SK-N-SH (cell line): ENCODE measurements at regions of chr2 and their contacts with region 1.

Region 1: DNA sequence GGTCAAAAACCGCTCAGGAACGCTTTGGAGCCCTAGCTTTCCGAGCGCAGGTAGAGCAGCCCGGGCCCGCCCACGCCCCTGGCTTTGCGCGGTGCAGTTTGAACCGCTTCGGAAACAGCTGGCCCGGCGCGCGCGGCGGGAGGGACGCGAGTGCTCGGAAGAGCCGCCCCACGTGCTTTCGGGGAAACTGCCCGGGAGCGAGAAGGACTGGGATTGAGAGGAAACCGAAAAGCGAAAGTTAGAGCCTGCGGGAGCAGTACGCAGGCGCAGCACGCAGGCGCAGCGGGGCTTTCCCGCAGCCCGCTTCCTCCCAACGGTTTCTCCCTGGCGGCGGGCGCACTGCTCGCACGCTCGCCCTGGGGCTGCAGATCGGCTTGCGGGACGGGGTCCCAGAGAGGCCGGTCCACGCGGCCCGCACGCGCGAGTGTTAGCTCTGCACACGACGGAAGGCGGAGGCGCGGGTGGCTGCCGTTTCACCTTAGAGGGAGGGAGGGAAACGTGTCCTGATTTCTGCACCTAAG is 6.3 kb upstream of the STAT1 start:
- DNase-seq: peak; percentile 98
- H3K4me3 ChIP-seq: peak overlapping the region; percentile 75 to 79
- H3K27ac ChIP-seq: peak overlapping the region; percentile 65 to 94
- H3K4me1 ChIP-seq: peaks cover 0 to 8% of the 10 kb centered on the region in 2 experiments; a peak in 3 of 4 replicates
- H3K27me3 ChIP-seq: no peaks in the 10 kb centered on the region
- CTCF ChIP-seq: peak; percentile 12; the same call in 1 of the 2 replicates
- EP300 ChIP-seq: peak; percentile 100
- RAD21 ChIP-seq: no peak

Region 2: DNA sequence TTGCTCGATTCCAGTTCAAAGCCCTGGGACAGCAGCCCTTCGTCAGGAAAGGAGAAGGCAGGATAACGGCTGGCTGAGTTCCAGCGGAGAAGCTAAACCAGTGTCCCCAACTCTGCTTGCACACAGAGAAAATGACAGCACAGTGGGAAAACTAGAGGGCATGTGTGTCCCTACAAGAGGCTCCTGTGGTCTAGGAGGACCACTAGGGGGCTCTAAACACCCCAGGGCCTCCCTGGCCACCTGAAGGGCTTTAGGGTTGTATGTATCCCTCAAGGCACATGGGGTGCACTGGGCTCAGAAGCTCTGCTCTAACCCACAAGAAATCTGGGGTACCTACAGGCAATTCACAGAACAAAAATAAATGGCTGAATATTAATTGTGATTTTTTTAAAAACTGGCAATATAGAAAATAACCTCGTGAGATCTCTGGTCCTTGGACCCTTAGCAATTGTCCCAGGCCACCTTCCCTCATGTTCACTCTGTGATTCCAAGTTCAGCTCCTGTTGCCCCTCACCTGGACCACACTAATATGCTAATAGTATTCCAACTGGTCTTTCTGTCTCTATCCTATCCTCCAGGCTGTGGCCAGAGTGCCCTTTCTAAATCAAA is 23.8 kb before region 1 on chr2:
- CTCF ChIA-PET with region 1: no interaction called
- POLR2A ChIA-PET with region 1: no interaction called
- DNase-seq: peak; percentile 66
- H3K4me3 ChIP-seq: no peak overlapping the region
- H3K27ac ChIP-seq: no peak overlapping the region
- H3K4me1 ChIP-seq: no peaks in the 10 kb centered on the region
- H3K27me3 ChIP-seq: no peaks in the 10 kb centered on the region
- CTCF ChIP-seq: peak; percentile 69
- EP300 ChIP-seq: no peak
- RAD21 ChIP-seq: peak; percentile 48

Region 3: GRCh38 chr2:191009541-191010374 is 10.5 kb before region 1 on chr2:
- CTCF ChIA-PET with region 1: interaction called, 3 read pairs
- POLR2A ChIA-PET with region 1: interaction called, 10 read pairs
- DNase-seq: no peak
- H3K4me3 ChIP-seq: no peak overlapping the region
- H3K27ac ChIP-seq: no peak overlapping the region
- H3K4me1 ChIP-seq: peaks cover 6 to 26% of the 10 kb centered on the region in 2 experiments; a peak in 2 of 4 replicates
- H3K27me3 ChIP-seq: no peaks in the 10 kb centered on the region
- CTCF ChIP-seq: no peak
- EP300 ChIP-seq: no peak
- RAD21 ChIP-seq: no peak